Aorta (tissue), 5 donors: ENCODE measurements at regions of chr14 and their contacts with region 1.

Region 1: GRCh38 chr14:104563742-104564615 is 15.6 kb upstream of the C14orf180 start:
- DNase-seq: peak; percentile 73 to 89
- ATAC-seq: peak; percentile 49
- H3K4me3 ChIP-seq: no peak overlapping the region
- H3K27ac ChIP-seq: no peak overlapping the region
- H3K4me1 ChIP-seq: no peaks in the 10 kb centered on the region
- H3K27me3 ChIP-seq: no peaks in the 10 kb centered on the region

Region 2: GRCh38 chr14:104078031-104078455 is 485.9 kb before region 1 on chr14:
- intact Hi-C with region 1: loop called (anchors 2 to 5 kb)
- DNase-seq: peak; percentile 90 to 92
- ATAC-seq: peak; percentile 89
- H3K4me3 ChIP-seq: no peak overlapping the region
- H3K27ac ChIP-seq: no peak overlapping the region
- H3K4me1 ChIP-seq: no peaks in the 10 kb centered on the region
- H3K27me3 ChIP-seq: peaks cover 2 to 5% of the 10 kb centered on the region in 2 donors

Region 3: DNA sequence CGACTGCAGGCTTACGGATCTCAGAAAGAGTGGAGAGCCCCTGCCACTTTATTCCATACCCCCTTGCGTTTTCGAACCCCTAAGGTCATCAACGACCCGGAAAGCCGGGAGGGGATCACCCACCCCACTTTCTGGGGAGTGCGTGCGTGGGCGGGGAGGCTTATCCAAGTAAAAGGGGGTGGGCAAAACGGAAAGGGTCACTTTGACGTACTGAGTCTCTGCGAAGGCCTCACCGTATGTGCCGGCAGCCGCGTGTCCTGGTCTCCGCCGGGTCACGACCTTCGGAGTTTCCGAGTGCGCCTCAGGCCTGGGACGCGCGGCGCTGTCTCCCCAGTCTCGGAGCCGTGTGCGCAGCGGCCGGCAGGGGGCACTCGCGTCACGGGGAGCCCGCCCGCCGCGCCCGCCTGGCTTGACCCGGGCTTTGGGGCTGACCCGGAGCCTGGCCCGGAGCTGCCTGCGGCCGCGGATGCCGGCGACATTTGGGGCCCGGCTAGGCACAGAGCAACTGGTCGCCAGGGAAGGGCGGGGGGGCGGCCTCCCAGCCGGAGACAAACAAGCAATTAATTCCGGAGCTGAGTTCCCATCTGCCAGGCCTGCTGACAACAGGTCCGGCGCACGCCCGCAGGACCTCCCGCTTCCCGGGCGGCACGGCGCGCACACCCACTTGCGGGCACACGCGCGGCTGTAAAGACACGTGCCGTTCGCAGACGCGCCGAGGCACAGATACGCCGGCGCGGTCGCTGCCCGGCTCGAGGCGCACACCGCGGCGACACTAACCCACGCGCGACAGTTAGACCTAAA is 426.5 kb before region 1 on chr14:
- intact Hi-C with region 1: loop called (anchors 5 kb)
- DNase-seq: peak; percentile 62 to 90
- ATAC-seq: peak; percentile 84
- H3K4me3 ChIP-seq: peak overlapping the region; percentile 5 to 21
- H3K27ac ChIP-seq: no peak overlapping the region
- H3K4me1 ChIP-seq: no peaks in the 10 kb centered on the region
- H3K27me3 ChIP-seq: no peaks in the 10 kb centered on the region

Region 4: GRCh38 chr14:104370256-104370870 is 193.6 kb before region 1 on chr14:
- intact Hi-C with region 1: no loop called
- DNase-seq: peak; percentile 41 to 45
- ATAC-seq: no peak
- H3K4me3 ChIP-seq: no peak overlapping the region
- H3K27ac ChIP-seq: no peak overlapping the region
- H3K4me1 ChIP-seq: no peaks in the 10 kb centered on the region
- H3K27me3 ChIP-seq: no peaks in the 10 kb centered on the region

Region 5: DNA sequence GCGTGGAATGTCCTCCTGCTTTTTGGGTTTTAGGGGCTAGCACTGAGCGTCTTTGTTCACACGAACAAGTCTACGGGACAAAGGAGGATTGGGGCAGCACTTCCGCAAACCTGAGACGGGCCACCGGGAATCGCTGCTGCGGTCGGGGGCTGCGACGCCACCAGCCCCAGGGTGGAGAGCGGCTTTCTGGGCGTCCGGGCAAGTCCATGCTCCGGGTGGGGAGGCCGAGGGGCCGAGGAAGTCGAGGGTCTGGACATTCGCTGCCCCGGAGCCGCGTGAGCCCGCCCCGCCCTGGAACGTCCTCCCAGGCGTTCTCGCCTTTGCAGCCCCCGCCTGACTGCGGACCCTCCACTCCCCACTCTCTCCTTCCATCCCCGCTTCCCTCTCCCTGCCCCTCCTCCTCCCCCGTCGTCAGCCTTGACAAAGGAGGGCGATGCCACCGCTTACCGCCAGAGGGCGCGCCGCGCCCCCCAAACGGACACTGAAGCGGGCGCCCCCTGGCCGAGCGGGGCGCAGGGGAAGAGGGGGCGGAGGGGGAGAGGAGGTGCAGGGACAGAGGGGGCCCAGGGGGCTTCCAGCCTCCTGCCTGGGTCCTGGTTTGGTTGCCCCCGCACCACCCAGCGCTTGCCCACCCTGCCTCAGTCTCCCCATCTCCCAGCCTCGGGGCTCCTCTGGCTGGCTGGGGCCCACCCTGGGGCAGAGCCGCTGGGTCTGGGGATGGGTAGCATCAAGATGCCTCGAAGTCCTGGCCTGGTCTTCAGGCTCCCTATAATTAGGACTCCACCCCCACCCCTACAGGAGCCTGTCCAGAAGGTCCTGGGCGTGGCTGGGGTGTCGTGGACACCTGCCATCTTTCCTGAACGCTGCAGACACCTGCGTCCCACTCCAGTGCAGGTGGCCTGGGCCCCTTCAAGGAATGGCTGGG is 86.3 kb after region 1 on chr14:
- intact Hi-C with region 1: no loop called
- DNase-seq: peak; percentile 70 to 90
- ATAC-seq: peak; percentile 87
- H3K4me3 ChIP-seq: no peak overlapping the region
- H3K27ac ChIP-seq: no peak overlapping the region
- H3K4me1 ChIP-seq: no peaks in the 10 kb centered on the region
- H3K27me3 ChIP-seq: no peaks in the 10 kb centered on the region

Region 6: GRCh38 chr14:104677512-104678332 is 113.7 kb after region 1 on chr14:
- intact Hi-C with region 1: no loop called
- DNase-seq: peak; percentile 90 to 92
- ATAC-seq: peak; percentile 85
- H3K4me3 ChIP-seq: peak overlapping the region; percentile 28 to 35
- H3K27ac ChIP-seq: peak overlapping the region in 1 of 2 donors; percentile 30
- H3K4me1 ChIP-seq: no peaks in the 10 kb centered on the region
- H3K27me3 ChIP-seq: no peaks in the 10 kb centered on the region